A673 (cell line): ENCODE measurements at regions of chr11 and their contacts with region 1.

Region 1: DNA sequence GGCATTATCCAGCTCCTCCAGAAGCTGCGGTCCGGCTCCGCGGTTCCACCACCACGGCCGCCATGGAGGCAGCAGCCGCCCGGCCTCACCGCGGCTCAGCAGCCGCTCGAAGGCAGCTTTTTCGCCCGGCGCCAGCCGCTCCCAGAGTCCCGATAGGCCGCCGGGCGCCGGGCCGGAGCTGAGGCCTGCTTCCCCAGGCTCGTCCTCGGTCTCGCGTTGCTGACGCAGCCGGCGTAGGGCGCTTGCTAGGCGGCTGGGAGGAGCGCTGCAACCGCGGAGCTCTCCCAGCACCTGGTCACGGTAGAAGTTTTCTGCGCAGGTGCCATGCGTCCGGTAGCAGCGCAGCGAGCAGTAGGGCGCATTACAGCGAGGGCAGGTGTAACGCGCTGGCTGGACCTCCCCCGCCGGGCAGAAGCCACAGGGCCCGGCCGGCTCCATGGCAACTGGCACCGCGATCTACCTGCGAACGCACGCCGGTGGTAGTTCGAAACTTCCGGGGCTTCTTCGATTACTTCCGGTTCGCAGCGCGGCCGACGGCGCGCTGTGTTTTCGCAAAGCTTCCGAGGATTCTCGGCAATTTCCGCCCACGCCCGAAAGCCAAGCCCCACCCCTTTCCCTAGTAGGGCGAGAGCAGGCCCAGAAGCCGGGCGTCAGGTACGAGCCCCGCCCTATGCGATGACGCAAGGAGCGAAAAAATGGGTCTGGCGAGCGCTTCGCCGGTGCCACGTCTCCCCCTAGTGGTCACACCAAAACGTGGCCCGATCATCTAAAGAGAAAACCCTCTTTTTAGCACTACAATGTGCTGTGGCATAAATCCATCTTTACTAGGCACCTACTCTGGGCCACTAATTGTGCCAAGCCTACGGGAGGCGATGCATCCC is at the start of gene ZNHIT2:
- DNase-seq: peak; percentile 100
- H3K4me3 ChIP-seq: peak within 1 kb of the TSS; percentile 95
- H3K27ac ChIP-seq: peak within 1 kb of the TSS; percentile 92
- H3K4me1 ChIP-seq: peaks cover 29% of the 10 kb centered on the region
- H3K27me3 ChIP-seq: no peaks in the 10 kb centered on the region
- CTCF ChIP-seq: peak; percentile 98
- total RNA-seq, gene ZNHIT2: 22.3 and 27.4 TPM in 2 replicates

Region 2: DNA sequence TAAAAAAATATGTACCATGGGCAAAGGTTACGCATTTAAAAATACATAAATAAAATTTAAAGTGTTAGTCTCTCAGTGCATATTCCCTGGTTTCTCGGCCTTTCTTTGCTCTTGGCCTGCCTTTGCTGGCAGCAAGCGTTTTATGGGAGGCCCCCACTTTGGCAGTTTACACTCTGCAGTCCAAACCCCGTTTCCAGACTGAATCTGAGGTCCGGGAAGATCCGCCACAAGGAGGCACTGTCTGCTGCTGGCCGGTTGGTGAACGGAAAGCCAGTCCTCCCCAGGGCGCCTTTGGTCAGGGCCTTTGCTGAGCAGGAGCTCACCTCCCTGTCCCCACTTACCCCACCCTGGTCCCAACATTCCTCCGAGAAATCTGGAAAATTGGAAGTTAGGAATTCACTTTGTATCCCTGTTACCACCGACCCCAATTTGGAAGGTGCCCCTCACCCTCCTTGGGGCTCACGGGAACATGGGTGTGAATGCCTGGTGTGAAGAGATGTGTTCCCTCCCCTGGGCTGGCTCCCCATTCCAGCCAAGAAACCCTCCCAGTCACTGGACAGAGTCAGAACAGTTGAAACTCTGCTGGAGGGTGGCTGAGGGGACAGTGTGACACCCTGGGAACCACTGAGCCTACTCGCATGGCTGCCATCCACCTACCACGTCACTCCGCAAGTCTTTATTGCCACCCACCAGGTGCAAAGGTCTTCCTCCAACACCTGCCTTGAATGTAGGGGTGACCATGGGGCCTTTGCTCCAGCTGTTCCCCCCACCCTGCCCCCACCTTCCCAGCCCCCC is 329.7 kb before region 1 on chr11:
- CTCF ChIA-PET with region 1: no interaction called
- POLR2A ChIA-PET with region 1: no interaction called
- intact Hi-C with region 1: loop called (anchors 10 kb)
- DNase-seq: peak; percentile 55
- H3K4me3 ChIP-seq: no peak overlapping the region
- H3K27ac ChIP-seq: no peak overlapping the region
- H3K4me1 ChIP-seq: no peaks in the 10 kb centered on the region
- H3K27me3 ChIP-seq: no peaks in the 10 kb centered on the region
- CTCF ChIP-seq: peak; percentile 88

Region 3: DNA sequence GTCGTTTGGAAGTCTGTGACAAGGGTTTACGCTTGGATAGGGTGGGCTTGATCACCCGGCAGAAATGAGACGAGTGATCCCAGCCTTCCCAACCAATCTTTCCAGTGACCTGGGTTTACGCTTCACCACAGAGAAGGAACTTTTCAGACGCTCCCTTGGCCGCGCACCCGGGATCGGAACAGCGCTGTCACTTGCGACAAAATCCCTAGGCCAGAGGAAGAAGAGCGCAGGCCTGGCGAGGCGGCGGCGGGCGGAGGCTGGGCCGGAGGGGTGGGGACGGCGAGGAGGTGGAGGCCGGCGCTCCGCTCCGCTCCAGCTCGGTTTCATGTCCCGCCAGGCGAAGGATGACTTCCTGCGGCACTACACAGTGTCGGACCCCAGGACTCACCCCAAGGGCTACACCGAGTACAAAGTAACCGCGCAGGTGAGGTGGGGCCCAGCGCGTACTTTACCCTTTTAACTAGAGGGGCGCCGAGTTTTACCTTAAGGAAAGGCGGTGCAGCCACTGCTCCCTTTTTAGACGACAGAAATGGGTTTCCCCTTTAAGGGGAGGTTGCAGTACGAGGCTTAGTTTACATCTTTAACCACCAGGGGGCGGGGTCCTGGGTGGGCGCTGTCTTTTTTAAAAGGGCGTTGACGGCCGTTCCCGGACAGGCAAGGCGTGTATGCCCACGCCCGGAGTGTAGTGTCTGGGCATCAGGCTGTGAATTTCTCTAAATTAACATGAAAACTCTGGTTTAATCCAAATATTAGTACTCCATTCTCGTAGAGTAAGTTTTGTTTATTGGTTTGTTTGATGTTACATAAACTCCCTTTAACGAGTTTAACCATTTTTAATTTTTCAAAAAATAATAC is 90.0 kb before region 1 on chr11 and contains the start of gene SNX15:
- CTCF ChIA-PET with region 1: no interaction called
- POLR2A ChIA-PET with region 1: no interaction called
- intact Hi-C with region 1: loop called (anchors 5 kb)
- DNase-seq: peak; percentile 100
- H3K4me3 ChIP-seq: peak within 1 kb of the TSS; percentile 52
- H3K27ac ChIP-seq: peak within 1 kb of the TSS; percentile 82
- H3K4me1 ChIP-seq: peaks cover 12% of the 10 kb centered on the region
- H3K27me3 ChIP-seq: no peaks in the 10 kb centered on the region
- CTCF ChIP-seq: peak; percentile 63
- total RNA-seq, gene SNX15: 28.3 and 34.7 TPM in 2 replicates